Activated T-helper 2 cell treated with anti-CD3 and anti-CD28 coated beads, Interferon-gamma antibody, Interleukin-2, Interleukin-4, amounts not matched to agents 10 μg/mL and 5 μg/mL and 100 μg/mL, durations not matched to agents 14 hours and 24 hours and 36 hours (primary cell): ENCODE measurements at regions of chr19 and their contacts with region 1.

Region 1: GRCh38 chr19:12974301-12975220 is 5.2 kb downstream of the DAND5 start:
- DNase-seq: no peak
- H3K4me3 Mint-ChIP-seq: no peak overlapping the region
- H3K27ac Mint-ChIP-seq: no peak overlapping the region
- H3K4me1 Mint-ChIP-seq: peaks cover 1% of the 10 kb centered on the region
- H3K27me3 Mint-ChIP-seq: peaks cover 7% of the 10 kb centered on the region

Region 2: DNA sequence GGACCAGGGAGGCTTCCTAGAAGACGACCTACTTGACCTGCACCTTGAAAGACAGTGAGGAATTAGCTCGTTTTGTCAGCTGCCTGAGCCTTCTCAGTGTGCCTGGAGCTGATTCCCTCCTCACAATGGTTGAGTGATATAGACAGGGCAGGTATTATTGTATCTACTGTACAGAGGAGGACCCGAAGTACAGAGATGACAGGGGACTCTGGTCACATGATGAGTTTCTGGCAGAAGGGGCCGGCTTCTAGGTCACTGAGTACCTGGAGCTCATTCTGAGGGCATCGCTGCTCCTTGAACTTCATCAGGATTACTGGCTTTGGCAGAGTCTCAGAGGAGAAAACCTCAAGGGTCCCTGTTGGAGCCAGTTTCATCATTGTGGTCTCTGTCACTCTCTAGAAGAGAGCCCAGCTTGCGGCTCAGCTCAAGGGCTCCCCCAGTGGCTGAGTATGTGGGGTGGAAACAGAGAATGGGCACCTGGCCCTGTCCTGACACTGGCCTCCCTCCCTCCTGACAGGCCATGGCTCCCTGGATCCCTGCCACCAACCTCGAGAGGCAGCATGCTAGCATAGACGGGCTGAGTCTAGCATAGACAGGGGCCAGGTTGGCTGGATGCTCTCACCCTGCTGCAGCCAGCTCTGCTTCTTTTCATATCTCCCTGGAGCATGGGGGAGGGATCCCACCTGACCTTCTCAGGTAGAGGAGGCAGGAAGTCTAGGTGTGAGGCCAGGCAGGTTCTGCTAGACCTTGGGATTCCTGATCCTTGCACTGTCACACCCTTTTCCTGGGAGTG is 59.5 kb after region 1 on chr19:
- intact Hi-C with region 1: loop called (anchors 5 kb)
- DNase-seq: no peak
- H3K4me3 Mint-ChIP-seq: no peak overlapping the region
- H3K27ac Mint-ChIP-seq: no peak overlapping the region
- H3K4me1 Mint-ChIP-seq: peaks cover 4% of the 10 kb centered on the region
- H3K27me3 Mint-ChIP-seq: peaks cover 2% of the 10 kb centered on the region